Ascending aorta (tissue), 2 donors: ENCODE measurements at regions of chr19 and their contacts with region 1.

Region 1: DNA sequence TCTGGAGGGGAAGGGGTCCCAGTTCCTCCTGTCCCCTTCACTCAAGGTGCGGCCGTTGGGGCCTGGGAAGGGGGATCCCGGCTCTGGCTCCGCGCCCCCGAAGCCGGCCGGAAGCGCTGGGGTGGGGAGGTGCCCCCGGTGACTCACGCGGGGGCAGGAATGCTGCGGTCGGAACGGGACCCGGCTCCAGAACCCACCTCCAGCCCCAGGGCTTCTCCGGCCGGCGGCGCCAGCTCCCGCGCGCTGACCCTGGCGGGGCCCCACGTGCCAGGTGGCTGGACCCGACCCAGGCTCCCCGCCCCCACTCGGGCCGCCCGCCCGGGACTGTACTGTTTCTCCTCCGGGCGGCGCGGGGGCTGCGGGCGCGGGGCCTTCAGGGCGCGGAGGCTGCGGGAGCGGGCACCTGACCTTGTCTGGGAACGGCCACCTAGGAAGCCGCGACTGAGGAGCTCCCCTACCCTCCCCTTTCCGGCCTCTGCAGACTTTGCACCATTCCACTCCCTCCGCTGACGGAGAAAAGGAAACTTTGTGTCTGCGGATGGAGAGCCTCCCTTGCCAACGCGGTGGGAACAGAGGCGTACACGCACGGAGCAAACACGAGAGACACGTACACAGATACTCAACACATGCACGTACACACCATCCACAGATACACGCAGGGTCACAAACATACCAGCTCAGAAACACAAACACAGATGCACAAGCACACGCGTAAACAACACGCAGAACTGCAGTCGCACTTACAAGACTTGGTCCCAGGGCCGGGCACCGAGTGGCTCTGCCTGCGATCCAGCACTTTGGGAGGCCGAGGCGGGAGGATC is 7.2 kb downstream of the AXL start:
- DNase-seq: peak; percentile 37 to 92
- H3K4me3 ChIP-seq: peak overlapping the region; percentile 63 to 66
- H3K27ac ChIP-seq: peak overlapping the region; percentile 92 to 93
- H3K4me1 ChIP-seq: peaks cover 7 to 32% of the 10 kb centered on the region in 2 donors
- H3K27me3 ChIP-seq: no peaks in the 10 kb centered on the region
- CTCF ChIP-seq: peak in 1 of 3 experiments; percentile 29

Region 2: DNA sequence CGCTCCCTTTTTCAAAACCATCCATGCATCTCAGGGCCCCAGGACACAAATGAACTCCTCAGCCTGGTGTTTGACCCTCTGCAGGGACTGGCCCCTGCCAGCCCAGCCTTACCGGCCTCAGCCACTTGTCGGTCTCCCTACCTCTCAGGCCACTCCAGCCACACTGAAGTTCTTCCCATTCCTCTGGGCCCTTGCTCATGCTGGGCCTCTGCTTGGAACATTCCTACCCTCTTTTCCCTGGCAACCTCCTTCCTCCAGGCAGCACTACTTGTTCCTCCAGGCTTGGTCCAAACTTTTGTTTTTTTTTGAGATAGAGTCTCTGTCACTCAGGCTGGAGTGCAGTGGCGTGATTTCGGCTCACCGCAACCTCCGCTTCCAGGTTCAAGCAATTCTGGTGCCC is 434.9 kb before region 1 on chr19:
- intact Hi-C with region 1: loop called (anchors 5 kb)
- DNase-seq: peak in 1 of 2 donors; percentile 84
- H3K4me3 ChIP-seq: no peak overlapping the region
- H3K27ac ChIP-seq: peak overlapping the region; percentile 82 to 85
- H3K4me1 ChIP-seq: peaks cover 14 to 32% of the 10 kb centered on the region in 2 donors
- H3K27me3 ChIP-seq: no peaks in the 10 kb centered on the region
- CTCF ChIP-seq: no peak

Region 3: GRCh38 chr19:41089955-41090354 is 136.3 kb before region 1 on chr19:
- intact Hi-C with region 1: no loop called
- DNase-seq: no peak
- H3K4me3 ChIP-seq: no peak overlapping the region
- H3K27ac ChIP-seq: no peak overlapping the region
- H3K4me1 ChIP-seq: no peaks in the 10 kb centered on the region
- H3K27me3 ChIP-seq: no peaks in the 10 kb centered on the region
- CTCF ChIP-seq: no peak

Region 4: DNA sequence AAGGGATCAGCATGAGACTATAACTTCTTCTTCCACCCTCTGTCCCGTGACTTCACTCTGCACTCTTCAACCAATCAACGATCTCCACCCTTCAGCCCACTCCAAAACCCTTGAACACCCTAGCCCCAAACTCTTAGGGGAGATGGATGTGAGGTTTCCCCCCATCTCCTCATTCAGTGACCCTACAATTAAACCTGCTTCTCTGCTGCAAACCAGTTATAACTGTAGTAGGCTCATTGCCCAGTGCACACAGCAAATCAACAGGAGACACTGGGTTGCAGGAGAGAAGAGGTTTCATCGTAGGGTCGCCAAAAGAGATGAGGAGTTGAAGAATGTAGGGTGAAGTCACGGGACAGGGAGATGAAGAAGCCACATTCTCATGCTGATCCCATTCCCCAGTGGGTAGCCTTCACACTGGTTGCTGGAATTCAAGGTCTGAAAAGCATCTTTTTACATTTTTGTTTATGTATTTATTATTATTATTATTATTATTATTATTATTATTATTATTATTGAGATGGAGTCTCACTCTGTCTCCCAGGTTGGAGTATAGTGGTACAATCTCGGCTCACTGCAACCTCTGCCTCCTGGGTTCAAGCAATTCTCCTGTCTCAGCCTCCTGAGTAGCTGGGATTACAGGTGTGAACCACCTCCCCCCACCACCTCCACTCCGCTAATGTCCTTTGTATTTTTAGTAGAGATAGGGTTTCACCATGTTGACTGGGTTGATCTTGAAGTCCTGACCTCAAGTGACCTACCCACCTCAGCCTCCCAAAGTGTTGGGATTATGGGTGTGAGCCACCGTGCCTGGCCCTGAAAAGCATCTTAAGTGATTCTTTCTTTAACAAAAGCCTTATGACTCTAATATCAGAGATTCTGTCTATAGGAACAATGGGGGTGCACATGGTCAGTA is 39.0 kb before region 1 on chr19:
- intact Hi-C with region 1: no loop called
- DNase-seq: no peak
- H3K4me3 ChIP-seq: no peak overlapping the region
- H3K27ac ChIP-seq: no peak overlapping the region
- H3K4me1 ChIP-seq: no peaks in the 10 kb centered on the region
- H3K27me3 ChIP-seq: no peaks in the 10 kb centered on the region
- CTCF ChIP-seq: no peak